ENCODE measurements at regions of chr3 and their contacts with region 1.

Region 1: GRCh38 chr3:15557511-15557946 is 36.0 kb upstream of the COLQ start:
- DNase-seq: peak; percentile 75
- H3K4me3 Mint-ChIP-seq: no peak overlapping the region
- H3K27ac Mint-ChIP-seq: no peak overlapping the region
- H3K4me1 Mint-ChIP-seq: no peaks in the 10 kb centered on the region
- H3K27me3 Mint-ChIP-seq: no peaks in the 10 kb centered on the region
- CTCF ChIP-seq: peak; percentile 38

Region 2: GRCh38 chr3:15205934-15206661 is 351.4 kb before region 1 on chr3 and contains the start of gene CAPN7:
- CTCF ChIA-PET with region 1: no interaction called
- intact Hi-C with region 1: loop called (anchors 1 kb)
- DNase-seq: peak; percentile 97
- H3K4me3 Mint-ChIP-seq: peak within 1 kb of the TSS; percentile 74
- H3K27ac Mint-ChIP-seq: peak within 1 kb of the TSS; percentile 79
- H3K4me1 Mint-ChIP-seq: no peaks in the 10 kb centered on the region
- H3K27me3 Mint-ChIP-seq: no peaks in the 10 kb centered on the region
- CTCF ChIP-seq: peak; percentile 30
- total RNA-seq, gene CAPN7: 24.1 and 24.8 TPM in 2 replicates

Region 3: DNA sequence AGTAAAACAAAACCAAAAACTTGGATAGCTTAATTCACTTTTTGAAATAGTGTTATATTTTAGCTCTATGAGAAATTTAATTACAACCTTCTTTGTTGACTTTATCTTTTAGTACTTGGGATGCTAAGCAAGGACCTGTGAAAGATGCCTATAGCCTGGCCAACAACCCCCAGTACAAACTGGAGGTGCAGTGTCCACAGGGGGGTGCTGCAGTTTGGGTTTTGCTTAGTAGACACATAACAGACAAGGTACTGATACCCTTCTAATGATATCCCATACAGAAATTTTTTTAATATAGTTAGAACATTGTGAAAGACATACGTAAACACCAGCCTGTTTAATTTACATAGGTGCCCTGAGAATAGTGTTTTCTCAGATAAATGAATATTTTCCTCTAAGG is 316.2 kb before region 1 on chr3:
- CTCF ChIA-PET with region 1: no interaction called
- intact Hi-C with region 1: loop called (anchors 10 kb)
- DNase-seq: peak; percentile 21
- H3K4me3 Mint-ChIP-seq: no peak overlapping the region
- H3K27ac Mint-ChIP-seq: no peak overlapping the region
- H3K4me1 Mint-ChIP-seq: no peaks in the 10 kb centered on the region
- H3K27me3 Mint-ChIP-seq: no peaks in the 10 kb centered on the region
- CTCF ChIP-seq: no peak

Region 4: DNA sequence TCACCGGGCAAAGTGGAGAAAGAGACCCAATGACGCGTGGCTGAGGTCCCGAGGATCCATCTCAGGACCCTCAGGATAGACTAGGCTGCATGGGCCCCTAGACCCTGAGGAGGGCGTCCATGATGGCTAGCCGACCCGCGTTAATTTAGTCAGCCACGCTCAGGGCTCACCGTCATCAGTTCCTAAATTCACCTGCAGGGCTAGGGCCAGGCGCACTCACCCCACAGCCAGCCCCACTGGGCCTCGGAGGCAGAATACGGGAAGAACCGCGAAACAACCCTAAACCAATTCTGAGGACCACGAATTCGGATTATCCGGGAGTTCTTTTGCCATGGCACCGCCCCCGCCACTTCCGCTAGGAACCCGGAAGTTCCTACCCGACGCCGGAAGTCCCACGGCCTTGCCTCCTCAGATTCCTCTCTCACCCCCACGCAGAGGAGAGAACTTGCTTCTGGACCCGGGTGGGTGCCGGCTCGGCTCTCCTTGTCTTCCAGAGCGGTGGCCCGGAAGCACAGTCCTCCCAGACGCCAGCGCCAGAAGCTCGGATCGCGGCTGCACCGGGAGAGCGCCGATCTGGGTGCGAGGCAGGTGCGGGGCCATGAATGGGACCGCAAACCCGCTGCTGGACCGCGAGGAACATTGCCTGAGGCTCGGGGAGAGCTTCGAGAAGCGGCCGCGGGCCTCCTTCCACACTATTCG is 130.2 kb before region 1 on chr3 and contains the starts of genes EAF1 and METTL6:
- CTCF ChIA-PET with region 1: no interaction called
- intact Hi-C with region 1: loop called (anchors 5 kb)
- DNase-seq: peak; percentile 80
- H3K4me3 Mint-ChIP-seq: peak within 1 kb of the TSS; percentile 94
- H3K27ac Mint-ChIP-seq: peak within 1 kb of the TSS; percentile 93
- H3K4me1 Mint-ChIP-seq: peaks cover 14% of the 10 kb centered on the region
- H3K27me3 Mint-ChIP-seq: no peaks in the 10 kb centered on the region
- CTCF ChIP-seq: peak; percentile 26
- total RNA-seq, gene EAF1: 23.9 and 24.3 TPM in 2 replicates
- total RNA-seq, gene METTL6: 22.5 and 23.0 TPM in 2 replicates